MCF 10A (cell line): ENCODE measurements at regions of chr12 and their contacts with region 1.

Region 1: DNA sequence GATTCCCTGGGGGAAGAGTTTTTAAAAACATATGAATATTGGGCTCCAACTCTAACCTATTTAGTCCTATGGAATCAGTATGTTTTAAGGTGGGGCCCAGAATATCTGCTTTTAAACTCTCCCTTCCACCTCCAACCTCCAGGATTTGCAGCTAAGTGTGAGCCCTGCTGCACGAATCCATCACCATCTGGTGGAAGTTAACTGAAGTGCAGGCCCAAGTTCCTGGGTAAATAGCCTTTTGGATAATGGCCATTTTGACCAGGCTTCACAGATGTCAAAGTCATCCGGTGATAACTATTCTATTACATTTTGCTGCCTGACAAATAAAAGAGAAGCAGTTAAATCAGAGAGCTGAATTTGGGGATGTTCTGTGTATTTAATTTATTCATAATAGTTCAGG is 58.1 kb upstream of the RMST start:
- DNase-seq: peak; percentile 43
- H3K4me3 Mint-ChIP-seq: no peak overlapping the region
- H3K27ac Mint-ChIP-seq: no peak overlapping the region
- H3K4me1 Mint-ChIP-seq: no peaks in the 10 kb centered on the region
- H3K27me3 Mint-ChIP-seq: no peaks in the 10 kb centered on the region
- CTCF ChIP-seq: peak; percentile 73

Region 2: DNA sequence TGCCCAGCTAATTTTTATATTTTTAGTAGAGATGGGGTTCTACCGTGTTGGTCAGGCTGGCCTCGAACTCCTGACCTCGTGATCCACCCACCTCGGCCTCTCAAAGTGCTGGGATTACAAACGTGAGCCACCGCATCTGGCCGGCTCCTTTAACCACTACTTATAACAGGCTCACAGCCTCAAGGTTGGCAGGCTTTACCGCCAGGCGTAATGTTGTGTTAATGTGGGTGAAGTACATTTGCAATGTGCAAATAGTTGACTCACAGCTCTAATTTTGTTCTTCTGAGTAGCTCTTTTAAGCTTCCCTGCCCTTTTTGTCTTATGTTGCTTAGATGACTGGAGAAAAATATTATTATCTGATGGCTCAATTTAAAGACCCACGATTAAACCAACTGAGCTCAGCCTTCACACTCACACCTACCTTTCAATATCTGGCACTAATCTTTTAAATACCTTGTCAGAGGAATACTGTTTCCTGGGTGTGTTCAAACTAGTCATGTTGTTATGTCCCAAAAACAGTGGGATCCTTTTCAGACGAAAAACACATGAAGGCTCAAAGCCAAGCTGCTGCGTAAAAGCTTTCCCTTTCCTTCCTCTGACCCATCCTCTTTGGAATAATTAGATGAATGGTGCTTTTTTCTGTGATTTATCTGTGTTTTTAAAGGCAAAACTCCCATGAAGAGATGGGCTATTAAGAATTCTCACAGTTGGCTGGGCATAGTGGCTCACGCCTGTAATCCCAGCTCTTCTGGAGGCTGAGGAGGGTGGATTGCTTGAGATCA is 1796.1 kb before region 1 on chr12:
- CTCF ChIA-PET with region 1: no interaction called
- POLR2A ChIA-PET with region 1: no interaction called
- intact Hi-C with region 1: no loop called
- DNase-seq: peak; percentile 83
- H3K4me3 Mint-ChIP-seq: peak overlapping the region; percentile 24
- H3K27ac Mint-ChIP-seq: peak overlapping the region; percentile 94
- H3K4me1 Mint-ChIP-seq: peaks cover 20% of the 10 kb centered on the region
- H3K27me3 Mint-ChIP-seq: no peaks in the 10 kb centered on the region
- CTCF ChIP-seq: no peak

Region 3: DNA sequence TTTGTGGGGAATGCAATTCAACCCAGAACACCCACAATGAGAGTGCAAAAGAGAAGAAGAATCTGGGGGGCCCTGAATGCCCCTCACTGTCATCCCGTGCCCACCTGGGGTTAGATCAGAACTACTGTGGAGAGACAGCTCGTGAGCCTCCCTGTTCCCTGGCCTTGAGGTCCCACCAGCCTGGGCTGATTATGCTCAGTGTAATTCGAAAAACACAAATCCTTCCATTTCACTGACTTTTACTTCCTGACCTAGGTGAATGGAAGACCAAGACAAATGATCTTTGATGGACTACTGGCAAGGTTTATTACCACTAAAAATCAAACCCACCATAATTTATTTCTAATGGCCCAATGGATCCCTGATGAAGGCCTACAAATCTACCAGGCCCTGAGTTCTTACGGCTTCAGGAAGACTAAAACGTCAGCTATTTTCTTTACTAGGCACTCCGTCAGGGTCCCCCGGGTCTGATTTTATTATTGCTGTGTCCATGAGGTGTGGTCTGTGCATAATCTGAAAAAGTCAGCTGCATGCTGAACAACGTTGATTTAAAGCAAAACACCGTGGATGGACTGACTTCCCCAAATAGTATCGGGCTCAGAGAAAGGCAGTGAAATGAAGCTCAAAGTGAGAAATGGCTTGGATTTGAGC is 13.2 kb after region 1 on chr12:
- CTCF ChIA-PET with region 1: interaction called, 17 read pairs
- POLR2A ChIA-PET with region 1: no interaction called
- intact Hi-C with region 1: no loop called
- DNase-seq: no peak
- H3K4me3 Mint-ChIP-seq: no peak overlapping the region
- H3K27ac Mint-ChIP-seq: no peak overlapping the region
- H3K4me1 Mint-ChIP-seq: no peaks in the 10 kb centered on the region
- H3K27me3 Mint-ChIP-seq: no peaks in the 10 kb centered on the region
- CTCF ChIP-seq: no peak

Region 4: GRCh38 chr12:97424911-97425310 is 20.4 kb after region 1 on chr12:
- CTCF ChIA-PET with region 1: interaction called, 10 read pairs
- POLR2A ChIA-PET with region 1: no interaction called
- intact Hi-C with region 1: no loop called
- DNase-seq: no peak
- H3K4me3 Mint-ChIP-seq: no peak overlapping the region
- H3K27ac Mint-ChIP-seq: no peak overlapping the region
- H3K4me1 Mint-ChIP-seq: no peaks in the 10 kb centered on the region
- H3K27me3 Mint-ChIP-seq: no peaks in the 10 kb centered on the region
- CTCF ChIP-seq: no peak